ENCODE measurements at regions of chr3 and their contacts with region 1.

Region 1: DNA sequence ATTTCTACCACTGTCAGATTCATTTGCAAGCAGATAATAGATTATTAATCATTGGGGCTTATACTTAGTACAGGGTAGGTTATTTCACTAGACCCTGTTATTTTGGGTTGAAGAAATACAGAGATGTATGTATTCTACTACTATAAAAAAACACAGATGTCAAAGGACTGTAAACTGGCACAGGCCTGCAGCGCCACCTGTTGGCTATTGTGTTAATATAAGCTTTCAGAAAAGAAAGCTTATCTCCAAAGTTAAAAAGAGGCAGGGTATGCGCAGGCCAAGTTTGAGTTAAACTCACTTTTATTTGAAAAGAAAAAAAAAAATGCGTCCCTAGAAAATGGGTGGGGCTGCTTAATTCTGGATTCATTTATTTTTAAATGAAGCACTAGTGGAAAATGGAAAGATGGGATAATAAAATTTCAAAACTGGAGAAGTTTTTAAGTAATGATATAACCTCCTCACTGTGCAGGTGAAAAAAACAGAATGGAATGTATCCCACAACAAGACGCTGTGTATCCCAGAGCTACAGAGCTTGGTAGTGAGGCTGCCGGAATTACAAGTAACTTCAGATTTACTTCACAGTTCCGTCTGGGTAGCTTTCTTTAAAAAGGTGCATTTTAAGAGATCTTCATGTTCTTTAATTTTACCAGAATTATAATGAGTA is 407.2 kb upstream of the TGFBR2 start:
- DNase-seq: peak; percentile 23
- H3K4me3 ChIP-seq: no peak overlapping the region; a peak in 1 of 4 replicates
- H3K27ac ChIP-seq: no peak overlapping the region
- H3K4me1 ChIP-seq: peaks cover 2 to 10% of the 10 kb centered on the region in 2 experiments; a peak in 3 of 4 replicates
- H3K27me3 ChIP-seq: no peaks in the 10 kb centered on the region
- CTCF ChIP-seq: peak; percentile 93
- EP300 ChIP-seq: no peak; a peak in 1 of 4 replicates
- RAD21 ChIP-seq: peak; percentile 93

Region 2: GRCh38 chr3:29144807-29145206 is 1054.4 kb before region 1 on chr3:
- CTCF ChIA-PET with region 1: interaction called, 29 read pairs
- POLR2A ChIA-PET with region 1: no interaction called
- DNase-seq: peak; percentile 55
- H3K4me3 ChIP-seq: peak overlapping the region in 1 of 2 experiments; percentile 34; a peak in 1 of 4 replicates
- H3K27ac ChIP-seq: peak overlapping the region; percentile 14 to 98; a peak in 3 of 4 replicates
- H3K4me1 ChIP-seq: peaks cover 23 to 25% of the 10 kb centered on the region in 2 experiments
- H3K27me3 ChIP-seq: no peaks in the 10 kb centered on the region
- CTCF ChIP-seq: peak; percentile 58
- EP300 ChIP-seq: peak in 1 of 2 experiments; percentile 93; a peak in 3 of 4 replicates
- RAD21 ChIP-seq: peak; percentile 94

Region 3: GRCh38 chr3:29949940-29950616 is 249.2 kb before region 1 on chr3:
- CTCF ChIA-PET with region 1: no interaction called
- POLR2A ChIA-PET with region 1: no interaction called
- DNase-seq: no peak
- H3K4me3 ChIP-seq: peak overlapping the region; percentile 19 to 37
- H3K27ac ChIP-seq: peak overlapping the region; percentile 28 to 85
- H3K4me1 ChIP-seq: peaks cover 22 to 30% of the 10 kb centered on the region in 2 experiments; a peak in 3 of 4 replicates
- H3K27me3 ChIP-seq: no peaks in the 10 kb centered on the region
- CTCF ChIP-seq: no peak
- EP300 ChIP-seq: peak in 1 of 2 experiments; percentile 39; a peak in 1 of 4 replicates
- RAD21 ChIP-seq: no peak

Region 4: GRCh38 chr3:30042274-30042859 is 156.9 kb before region 1 on chr3:
- CTCF ChIA-PET with region 1: interaction called, 193 read pairs
- POLR2A ChIA-PET with region 1: no interaction called
- DNase-seq: peak; percentile 49
- H3K4me3 ChIP-seq: no peak overlapping the region
- H3K27ac ChIP-seq: no peak overlapping the region; a peak in 1 of 4 replicates
- H3K4me1 ChIP-seq: peaks cover 8 to 20% of the 10 kb centered on the region in 2 experiments
- H3K27me3 ChIP-seq: no peaks in the 10 kb centered on the region
- CTCF ChIP-seq: peak; percentile 92
- EP300 ChIP-seq: peak in 1 of 2 experiments; percentile 27; a peak in 1 of 4 replicates
- RAD21 ChIP-seq: peak; percentile 99

Region 5: GRCh38 chr3:30167541-30168011 is 31.7 kb before region 1 on chr3:
- CTCF ChIA-PET with region 1: interaction called, 15 read pairs
- POLR2A ChIA-PET with region 1: no interaction called
- DNase-seq: no peak
- H3K4me3 ChIP-seq: no peak overlapping the region
- H3K27ac ChIP-seq: no peak overlapping the region
- H3K4me1 ChIP-seq: peaks cover 0 to 12% of the 10 kb centered on the region in 2 experiments
- H3K27me3 ChIP-seq: no peaks in the 10 kb centered on the region
- CTCF ChIP-seq: no peak
- EP300 ChIP-seq: 0 out of 4 replicates have a peak, but pooled peaks of 1 of the 2 experiments have one; percentile 30
- RAD21 ChIP-seq: no peak

Region 6: DNA sequence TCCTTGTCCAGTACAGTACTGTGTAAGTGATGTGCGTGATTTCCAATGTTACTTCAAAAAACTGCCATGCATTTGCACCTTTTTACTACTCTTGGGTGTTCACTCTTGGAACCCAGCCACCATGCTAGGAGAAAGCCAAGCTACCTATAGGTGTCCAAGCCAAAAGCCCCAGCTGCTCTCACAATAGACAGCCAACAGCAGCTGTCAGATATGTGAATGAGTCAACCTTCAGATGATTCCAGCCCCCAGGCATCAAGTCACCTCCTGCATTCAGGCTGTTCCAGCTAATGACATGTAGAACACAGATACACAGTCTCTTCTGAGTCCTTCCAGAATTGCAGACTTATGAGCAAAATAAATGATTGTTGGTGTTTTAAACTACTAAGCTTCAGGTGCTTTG is 10.5 kb before region 1 on chr3:
- CTCF ChIA-PET with region 1: interaction called, 17 read pairs
- POLR2A ChIA-PET with region 1: no interaction called
- DNase-seq: no peak
- H3K4me3 ChIP-seq: no peak overlapping the region
- H3K27ac ChIP-seq: peak overlapping the region in 1 of 2 experiments; percentile 11; a peak in 1 of 4 replicates
- H3K4me1 ChIP-seq: peaks cover 10 to 21% of the 10 kb centered on the region in 2 experiments; a peak in 3 of 4 replicates
- H3K27me3 ChIP-seq: no peaks in the 10 kb centered on the region
- CTCF ChIP-seq: no peak
- EP300 ChIP-seq: peak in 1 of 2 experiments; percentile 61; a peak in 3 of 4 replicates
- RAD21 ChIP-seq: no peak

Region 7: GRCh38 chr3:30693470-30694120 is 494.4 kb after region 1 on chr3:
- CTCF ChIA-PET with region 1: interaction called, 99 read pairs
- POLR2A ChIA-PET with region 1: no interaction called
- DNase-seq: peak; percentile 55
- H3K4me3 ChIP-seq: no peak overlapping the region; a peak in 1 of 4 replicates
- H3K27ac ChIP-seq: no peak overlapping the region; a peak in 1 of 4 replicates
- H3K4me1 ChIP-seq: peaks cover 27 to 32% of the 10 kb centered on the region in 2 experiments
- H3K27me3 ChIP-seq: no peaks in the 10 kb centered on the region
- CTCF ChIP-seq: peak; percentile 89
- EP300 ChIP-seq: no peak
- RAD21 ChIP-seq: peak; percentile 100

Measured in SK-N-SH (cell line).